MCF 10A (cell line): ENCODE measurements at regions of chr18 and their contacts with region 1.

Region 1: DNA sequence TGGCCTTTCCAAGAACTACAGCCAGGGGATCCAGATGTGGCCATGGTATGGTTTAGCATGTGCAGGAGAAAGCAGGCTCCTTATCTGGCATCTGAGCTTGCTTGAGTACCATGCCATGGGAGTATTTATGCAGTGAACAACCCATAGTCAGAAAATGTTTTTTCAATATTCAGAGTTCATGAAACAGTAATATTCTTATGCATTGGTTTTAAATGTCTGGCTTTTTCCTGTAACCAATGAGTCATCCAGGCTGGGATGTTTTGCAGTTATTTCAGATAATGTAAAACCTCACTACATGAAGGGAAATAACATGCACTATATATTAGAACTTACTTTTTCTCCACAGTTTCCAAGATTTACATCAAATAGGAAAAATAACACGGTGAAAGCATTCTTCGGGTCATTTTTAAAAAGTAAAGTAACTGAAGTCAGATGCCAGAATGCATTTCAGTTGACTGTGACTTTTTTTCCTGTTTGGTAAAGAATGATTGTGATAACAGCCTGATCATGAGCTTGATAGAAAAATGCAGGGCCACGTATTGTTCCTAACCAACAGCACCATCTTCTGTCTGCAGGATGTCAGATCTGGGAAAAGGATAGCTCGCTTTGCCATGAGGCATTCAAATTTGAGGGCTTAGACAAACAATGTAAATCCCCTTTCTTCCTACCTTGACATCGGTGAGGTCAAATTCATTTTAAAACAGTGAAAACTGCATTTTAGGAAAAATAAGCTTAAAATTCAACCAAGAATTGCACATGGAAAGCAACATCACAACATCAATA is 152.8 kb downstream of the DSC3 start:
- DNase-seq: peak; percentile 60
- H3K4me3 Mint-ChIP-seq: no peak overlapping the region
- H3K27ac Mint-ChIP-seq: no peak overlapping the region
- H3K4me1 Mint-ChIP-seq: no peaks in the 10 kb centered on the region
- H3K27me3 Mint-ChIP-seq: peaks cover 61% of the 10 kb centered on the region
- CTCF ChIP-seq: peak; percentile 23

Region 2: GRCh38 chr18:29892960-29893558 is 996.7 kb before region 1 on chr18:
- CTCF ChIA-PET with region 1: interaction called, 3 read pairs
- POLR2A ChIA-PET with region 1: no interaction called
- intact Hi-C with region 1: loop called (anchors 5 kb)
- DNase-seq: peak; percentile 16
- H3K4me3 Mint-ChIP-seq: no peak overlapping the region
- H3K27ac Mint-ChIP-seq: no peak overlapping the region
- H3K4me1 Mint-ChIP-seq: no peaks in the 10 kb centered on the region
- H3K27me3 Mint-ChIP-seq: no peaks in the 10 kb centered on the region
- CTCF ChIP-seq: peak; percentile 65